Ascending aorta (tissue), 2 donors: ENCODE measurements at regions of chr6 and their contacts with region 1.

Region 1: GRCh38 chr6:132011582-132011981 is 60.4 kb upstream of the CCN2 start:
- DNase-seq: no peak
- H3K4me3 ChIP-seq: peak overlapping the region in 1 of 2 donors; percentile 13
- H3K27ac ChIP-seq: peak overlapping the region; percentile 73 to 81
- H3K4me1 ChIP-seq: peaks cover 0 to 13% of the 10 kb centered on the region in 2 donors
- H3K27me3 ChIP-seq: no peaks in the 10 kb centered on the region
- CTCF ChIP-seq: no peak

Region 2: GRCh38 chr6:132084833-132085509 is 73.4 kb after region 1 on chr6:
- intact Hi-C with region 1: loop called (anchors 5 kb)
- DNase-seq: no peak
- H3K4me3 ChIP-seq: peak overlapping the region in 1 of 2 donors; percentile 29
- H3K27ac ChIP-seq: peak overlapping the region; percentile 93 to 95
- H3K4me1 ChIP-seq: peaks cover 6 to 23% of the 10 kb centered on the region in 2 donors
- H3K27me3 ChIP-seq: no peaks in the 10 kb centered on the region
- CTCF ChIP-seq: no peak

Region 3: GRCh38 chr6:132505158-132505557 is 493.6 kb after region 1 on chr6:
- intact Hi-C with region 1: no loop called
- DNase-seq: no peak
- H3K4me3 ChIP-seq: no peak overlapping the region
- H3K27ac ChIP-seq: peak overlapping the region in 1 of 2 donors; percentile 24
- H3K4me1 ChIP-seq: peaks cover 0 to 19% of the 10 kb centered on the region in 2 donors
- H3K27me3 ChIP-seq: no peaks in the 10 kb centered on the region
- CTCF ChIP-seq: no peak